CD8-positive, alpha-beta T cell (primary cell): ENCODE measurements at regions of chr7 and their contacts with region 1.

Region 1: DNA sequence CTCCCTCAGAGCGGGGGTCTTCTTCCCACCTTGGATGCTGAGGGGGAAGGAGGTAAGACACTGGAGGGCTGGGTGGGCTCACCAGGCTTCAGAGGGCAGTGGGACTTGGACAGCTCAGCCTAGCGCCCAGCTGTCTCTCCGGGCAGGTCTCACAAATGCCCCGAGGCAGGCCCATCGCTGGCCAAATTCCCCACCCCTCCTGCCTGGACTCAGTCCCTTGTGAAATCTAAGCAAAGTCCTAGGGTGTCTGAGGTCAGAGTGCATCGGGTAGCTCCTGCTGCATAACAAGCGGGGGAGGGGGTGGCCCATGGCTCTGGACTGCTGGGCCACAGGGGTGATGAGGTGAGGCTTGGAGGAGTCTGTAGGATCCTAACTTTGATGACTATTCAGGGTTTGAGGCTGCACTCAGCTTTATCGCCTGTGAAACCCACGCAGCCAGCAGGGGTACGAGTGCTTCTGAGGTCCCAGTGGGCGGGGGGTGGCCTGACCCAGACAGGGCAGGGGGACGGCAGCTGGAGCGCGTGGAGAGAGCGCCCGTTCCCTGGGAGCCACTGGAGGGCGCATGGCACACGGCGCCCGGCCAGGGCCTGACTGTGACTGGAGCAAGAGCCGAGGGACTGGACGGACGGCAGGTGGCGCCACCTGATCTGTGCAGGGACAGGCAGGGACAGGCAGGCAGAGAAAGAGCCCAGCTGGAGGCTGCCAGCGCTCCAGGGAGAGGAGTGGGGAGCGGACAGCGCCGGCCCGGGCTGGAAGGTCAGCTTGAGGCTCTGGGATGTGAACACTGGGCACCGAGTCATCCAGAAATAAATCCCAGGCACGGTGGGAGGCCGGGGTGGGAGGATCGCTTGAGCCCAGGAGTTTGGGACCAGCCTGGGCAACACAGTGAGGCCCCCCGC is 10.0 kb downstream of the CYP2W1 start:
- DNase-seq: peak; percentile 88 to 96 (median 95)
- ATAC-seq: peak; percentile 99
- H3K4me3 ChIP-seq: no peak overlapping the region
- H3K4me3 Mint-ChIP-seq: no peak overlapping the region
- H3K27ac ChIP-seq: no peak overlapping the region
- H3K27ac Mint-ChIP-seq: no peak overlapping the region
- H3K4me1 ChIP-seq: peaks cover 4% of the 10 kb centered on the region
- H3K4me1 Mint-ChIP-seq: peaks cover 4% of the 10 kb centered on the region
- H3K27me3 ChIP-seq: no peaks in the 10 kb centered on the region
- H3K27me3 Mint-ChIP-seq: no peaks in the 10 kb centered on the region
- CTCF ChIP-seq: peak; percentile 97

Region 2: GRCh38 chr7:131781-132482 is 861.0 kb before region 1 on chr7:
- CTCF ChIA-PET with region 1: no interaction called
- POLR2A ChIA-PET with region 1: no interaction called
- intact Hi-C with region 1: no loop called
- DNase-seq: no peak
- ATAC-seq: no peak
- H3K4me3 ChIP-seq: no peak overlapping the region
- H3K4me3 Mint-ChIP-seq: no peak overlapping the region
- H3K27ac ChIP-seq: no peak overlapping the region
- H3K27ac Mint-ChIP-seq: no peak overlapping the region
- H3K4me1 ChIP-seq: no peaks in the 10 kb centered on the region
- H3K4me1 Mint-ChIP-seq: no peaks in the 10 kb centered on the region
- H3K27me3 ChIP-seq: no peaks in the 10 kb centered on the region
- H3K27me3 Mint-ChIP-seq: peaks cover 7% of the 10 kb centered on the region
- CTCF ChIP-seq: no peak

Region 3: DNA sequence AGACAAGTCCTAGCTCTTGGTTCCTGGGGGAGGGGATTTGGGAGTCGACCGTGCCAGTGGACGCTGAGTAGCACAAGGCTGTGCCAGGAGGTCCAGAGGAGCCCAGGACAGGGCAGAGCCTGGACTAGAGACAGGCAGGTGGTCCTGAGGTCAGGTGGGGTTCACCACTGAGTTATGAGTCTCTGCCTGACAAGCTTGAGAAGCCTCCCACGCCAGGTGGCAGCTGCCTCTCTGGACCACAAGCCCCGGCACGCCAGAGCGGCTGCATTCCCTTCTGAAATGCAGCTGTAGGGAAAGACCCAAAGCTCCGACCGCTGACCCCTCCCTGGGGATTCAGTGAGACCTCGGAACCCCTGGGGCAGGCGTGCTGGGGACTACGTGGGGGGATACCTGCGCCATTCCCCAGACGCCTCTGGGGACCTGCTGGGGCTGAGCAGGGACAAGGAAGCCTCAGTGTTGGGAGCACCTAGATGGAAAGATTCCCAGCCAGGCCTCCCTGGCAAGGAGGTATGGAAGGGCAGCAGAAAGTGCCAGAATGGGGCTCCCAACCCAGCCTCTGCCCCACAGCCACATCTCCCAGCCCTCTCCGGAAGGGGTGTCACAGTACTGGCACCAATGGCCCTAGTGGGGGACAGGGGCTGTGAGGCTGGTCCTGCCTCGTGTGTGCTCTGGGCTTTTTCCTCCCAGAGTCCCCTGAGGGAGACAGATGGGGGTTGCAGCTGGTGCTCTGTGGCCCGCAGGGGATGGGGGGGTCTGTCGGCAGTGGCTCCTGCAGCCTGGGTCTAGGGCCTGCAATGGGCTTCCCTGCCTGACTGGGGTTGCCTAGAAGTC is 502.3 kb before region 1 on chr7:
- CTCF ChIA-PET with region 1: no interaction called
- POLR2A ChIA-PET with region 1: no interaction called
- intact Hi-C with region 1: no loop called
- DNase-seq: peak in 1 of 9 experiments; percentile 18
- ATAC-seq: no peak
- H3K4me3 ChIP-seq: no peak overlapping the region
- H3K4me3 Mint-ChIP-seq: no peak overlapping the region
- H3K27ac ChIP-seq: no peak overlapping the region
- H3K27ac Mint-ChIP-seq: no peak overlapping the region
- H3K4me1 ChIP-seq: no peaks in the 10 kb centered on the region
- H3K4me1 Mint-ChIP-seq: no peaks in the 10 kb centered on the region
- H3K27me3 ChIP-seq: no peaks in the 10 kb centered on the region
- H3K27me3 Mint-ChIP-seq: no peaks in the 10 kb centered on the region
- CTCF ChIP-seq: no peak

Region 4: DNA sequence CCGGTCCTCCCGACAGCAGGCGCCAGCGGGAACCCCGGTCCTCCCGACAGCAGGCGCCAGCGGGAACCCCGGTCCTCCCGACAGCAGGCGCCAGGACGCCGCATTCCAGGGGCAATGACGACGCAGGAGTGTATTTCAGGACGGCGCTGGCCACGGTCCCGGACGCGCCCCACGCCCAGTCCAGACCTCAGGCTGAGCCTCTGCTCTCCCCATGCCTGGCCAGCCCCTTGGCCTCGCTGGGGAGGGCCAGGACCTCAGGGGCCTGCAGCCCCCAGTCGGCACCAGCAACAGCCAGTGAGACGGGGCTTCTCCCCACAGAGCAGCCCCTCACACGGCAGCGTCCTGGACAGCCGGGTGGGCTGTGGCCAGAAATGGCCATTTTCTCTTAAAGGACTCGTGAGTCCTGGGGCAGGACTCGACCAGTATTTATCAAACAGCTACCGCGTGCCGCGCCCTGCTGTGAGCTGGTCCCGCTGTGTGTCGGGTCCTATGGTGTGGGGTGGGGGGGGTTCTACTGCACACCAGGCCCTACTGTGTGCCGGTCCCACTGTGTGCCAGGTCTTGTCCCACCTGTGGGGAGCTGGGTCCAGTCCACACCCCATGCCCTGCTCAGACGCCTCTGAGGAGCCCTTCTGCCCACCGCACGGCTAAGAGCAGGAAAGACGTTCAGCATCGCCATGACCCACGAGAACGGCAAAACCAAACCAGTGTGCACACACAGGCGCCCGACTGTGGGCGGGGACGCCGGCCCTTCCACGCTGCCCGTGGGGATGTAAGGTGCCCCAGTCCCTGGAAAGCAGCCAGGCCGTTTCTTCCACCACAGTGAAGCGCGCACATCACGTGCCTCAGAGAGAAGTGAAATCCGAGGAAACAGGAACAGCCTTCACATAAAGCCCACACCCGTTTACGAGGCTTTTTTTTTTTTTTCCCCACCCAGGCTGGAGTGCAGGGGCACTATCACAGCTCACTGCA is 83.3 kb before region 1 on chr7:
- CTCF ChIA-PET with region 1: interaction called, 21 read pairs
- POLR2A ChIA-PET with region 1: no interaction called
- intact Hi-C with region 1: no loop called
- DNase-seq: peak in 6 of 9 experiments; percentile 30 to 64 (median 47)
- ATAC-seq: peak; percentile 19
- H3K4me3 ChIP-seq: peak overlapping the region in 1 of 2 experiments; percentile 48
- H3K4me3 Mint-ChIP-seq: peak overlapping the region; percentile 55
- H3K27ac ChIP-seq: no peak overlapping the region
- H3K27ac Mint-ChIP-seq: peak overlapping the region; percentile 75
- H3K4me1 ChIP-seq: peaks cover 15% of the 10 kb centered on the region
- H3K4me1 Mint-ChIP-seq: peaks cover 9% of the 10 kb centered on the region
- H3K27me3 ChIP-seq: no peaks in the 10 kb centered on the region
- H3K27me3 Mint-ChIP-seq: no peaks in the 10 kb centered on the region
- CTCF ChIP-seq: no peak

Region 5: DNA sequence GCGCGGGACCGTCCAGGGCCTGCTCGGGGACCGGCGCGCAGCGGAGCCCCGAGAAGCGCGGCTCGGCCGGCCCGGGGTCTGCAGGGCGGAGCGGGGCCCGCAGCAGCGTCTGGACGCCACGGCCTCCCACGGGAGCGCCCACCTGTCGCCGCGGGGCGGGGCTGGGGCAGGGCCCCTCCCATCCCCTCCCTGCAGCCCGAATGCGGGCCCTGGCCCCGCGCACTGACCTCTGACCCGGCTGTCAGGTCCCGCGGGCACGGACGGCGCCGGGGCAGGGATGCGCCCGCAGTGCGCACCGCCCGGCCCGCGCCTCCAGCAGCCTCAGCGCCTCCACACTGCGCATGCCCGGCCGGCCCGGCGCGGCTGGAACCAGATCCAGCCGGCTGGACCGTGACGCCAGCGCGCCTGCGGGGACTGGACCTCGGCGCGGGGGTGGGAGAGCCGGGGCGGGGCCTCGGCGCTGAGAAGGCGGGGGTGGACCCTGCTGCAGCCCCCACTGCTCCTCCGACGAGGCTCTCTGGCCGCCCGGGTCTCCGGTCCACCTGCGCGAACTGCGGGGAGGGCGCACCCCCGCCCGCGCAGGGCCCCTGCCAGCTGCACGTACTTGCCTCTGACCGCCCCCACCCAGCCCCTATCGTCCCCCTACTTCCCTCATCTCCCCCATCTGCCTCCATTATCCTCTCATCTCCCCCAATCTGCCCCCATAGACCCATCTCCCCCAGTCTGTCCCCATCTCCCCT is 35.2 kb after region 1 on chr7:
- CTCF ChIA-PET with region 1: interaction called, 36 read pairs
- POLR2A ChIA-PET with region 1: no interaction called
- intact Hi-C with region 1: loop called in 1 of 2 experiments (anchors 1 kb)
- DNase-seq: peak; percentile 67 to 90 (median 76)
- ATAC-seq: peak; percentile 72
- H3K4me3 ChIP-seq: peak overlapping the region; percentile 36 to 57
- H3K4me3 Mint-ChIP-seq: peak overlapping the region; percentile 82
- H3K27ac ChIP-seq: peak overlapping the region; percentile 48 to 81
- H3K27ac Mint-ChIP-seq: no peak overlapping the region
- H3K4me1 ChIP-seq: peaks cover 33% of the 10 kb centered on the region
- H3K4me1 Mint-ChIP-seq: peaks cover 34% of the 10 kb centered on the region
- H3K27me3 ChIP-seq: no peaks in the 10 kb centered on the region
- H3K27me3 Mint-ChIP-seq: no peaks in the 10 kb centered on the region
- CTCF ChIP-seq: no peak

Region 6: GRCh38 chr7:1059200-1060091 is 66.5 kb after region 1 on chr7:
- CTCF ChIA-PET with region 1: interaction called, 366 read pairs
- POLR2A ChIA-PET with region 1: interaction called, 4 read pairs
- intact Hi-C with region 1: loop called in 1 of 2 experiments (anchors 1 kb)
- DNase-seq: peak in 2 of 9 experiments; percentile 32 to 33
- ATAC-seq: peak; percentile 45
- H3K4me3 ChIP-seq: no peak overlapping the region
- H3K4me3 Mint-ChIP-seq: no peak overlapping the region
- H3K27ac ChIP-seq: no peak overlapping the region
- H3K27ac Mint-ChIP-seq: no peak overlapping the region
- H3K4me1 ChIP-seq: peaks cover 19% of the 10 kb centered on the region
- H3K4me1 Mint-ChIP-seq: peaks cover 15% of the 10 kb centered on the region
- H3K27me3 ChIP-seq: no peaks in the 10 kb centered on the region
- H3K27me3 Mint-ChIP-seq: no peaks in the 10 kb centered on the region
- CTCF ChIP-seq: no peak

Region 7: GRCh38 chr7:1103009-1103788 is 110.2 kb after region 1 on chr7:
- CTCF ChIA-PET with region 1: interaction called, 14 read pairs
- POLR2A ChIA-PET with region 1: no interaction called
- intact Hi-C with region 1: no loop called
- DNase-seq: peak in 1 of 9 experiments; percentile 25
- ATAC-seq: no peak
- H3K4me3 ChIP-seq: peak overlapping the region in 1 of 2 experiments; percentile 46
- H3K4me3 Mint-ChIP-seq: peak overlapping the region; percentile 73
- H3K27ac ChIP-seq: peak overlapping the region in 1 of 2 experiments; percentile 13
- H3K27ac Mint-ChIP-seq: no peak overlapping the region
- H3K4me1 ChIP-seq: peaks cover 5% of the 10 kb centered on the region
- H3K4me1 Mint-ChIP-seq: peaks cover 16% of the 10 kb centered on the region
- H3K27me3 ChIP-seq: no peaks in the 10 kb centered on the region
- H3K27me3 Mint-ChIP-seq: no peaks in the 10 kb centered on the region
- CTCF ChIP-seq: no peak

Region 8: DNA sequence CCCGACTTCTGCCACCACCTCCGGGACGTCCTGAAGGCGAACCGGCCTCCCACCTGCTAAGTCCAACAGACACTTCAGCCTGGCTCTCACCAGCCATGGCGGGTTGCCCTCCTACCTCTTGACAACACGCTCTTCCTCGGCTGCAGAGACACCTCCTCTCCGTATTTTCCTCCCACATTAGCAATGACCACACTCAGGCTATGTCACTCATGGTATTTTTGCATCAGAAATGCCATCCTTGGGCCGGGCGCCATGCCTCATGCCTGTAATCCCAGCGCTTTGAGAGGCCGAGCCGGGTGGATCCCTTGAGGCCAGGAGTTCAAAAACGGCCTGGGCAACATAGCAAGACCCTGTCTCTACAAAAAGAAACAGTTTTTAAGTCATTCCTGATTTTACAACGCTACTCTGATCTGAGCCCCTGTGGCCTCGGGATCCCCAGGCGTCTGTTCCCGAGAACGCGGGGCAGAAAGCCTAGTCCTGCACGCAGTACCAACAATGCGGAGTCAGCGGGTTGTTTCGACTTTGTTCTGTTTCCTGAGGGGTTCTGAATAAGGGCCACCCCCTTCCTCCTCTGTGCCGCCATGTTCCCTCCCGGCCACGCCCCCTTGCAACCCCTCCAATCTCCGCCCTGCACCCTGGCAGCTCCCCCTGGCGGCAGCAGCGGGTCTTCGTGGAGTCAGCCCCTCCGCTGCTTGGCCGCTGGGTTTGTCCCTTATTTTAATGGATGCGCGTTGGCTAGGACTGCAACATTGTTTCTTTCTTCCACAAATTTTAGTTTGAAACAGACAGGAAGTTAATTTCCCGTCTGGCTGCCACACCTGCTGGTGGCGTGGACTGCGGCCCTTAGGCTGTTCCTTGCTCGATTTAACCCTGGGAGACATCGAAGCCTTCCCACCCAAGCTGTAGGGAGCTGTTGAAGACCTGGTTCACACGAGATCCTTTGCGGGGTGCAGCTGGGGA is 176.7 kb after region 1 on chr7:
- CTCF ChIA-PET with region 1: interaction called, 14 read pairs
- POLR2A ChIA-PET with region 1: no interaction called
- intact Hi-C with region 1: loop called in 1 of 2 experiments (anchors 1 kb)
- DNase-seq: peak; percentile 44 to 97 (median 93)
- ATAC-seq: peak; percentile 100
- H3K4me3 ChIP-seq: peak overlapping the region; percentile 42 to 50
- H3K4me3 Mint-ChIP-seq: peak overlapping the region; percentile 85
- H3K27ac ChIP-seq: peak overlapping the region; percentile 40 to 41
- H3K27ac Mint-ChIP-seq: peak overlapping the region; percentile 92
- H3K4me1 ChIP-seq: peaks cover 8% of the 10 kb centered on the region
- H3K4me1 Mint-ChIP-seq: peaks cover 12% of the 10 kb centered on the region
- H3K27me3 ChIP-seq: no peaks in the 10 kb centered on the region
- H3K27me3 Mint-ChIP-seq: no peaks in the 10 kb centered on the region
- CTCF ChIP-seq: peak; percentile 77

Region 9: DNA sequence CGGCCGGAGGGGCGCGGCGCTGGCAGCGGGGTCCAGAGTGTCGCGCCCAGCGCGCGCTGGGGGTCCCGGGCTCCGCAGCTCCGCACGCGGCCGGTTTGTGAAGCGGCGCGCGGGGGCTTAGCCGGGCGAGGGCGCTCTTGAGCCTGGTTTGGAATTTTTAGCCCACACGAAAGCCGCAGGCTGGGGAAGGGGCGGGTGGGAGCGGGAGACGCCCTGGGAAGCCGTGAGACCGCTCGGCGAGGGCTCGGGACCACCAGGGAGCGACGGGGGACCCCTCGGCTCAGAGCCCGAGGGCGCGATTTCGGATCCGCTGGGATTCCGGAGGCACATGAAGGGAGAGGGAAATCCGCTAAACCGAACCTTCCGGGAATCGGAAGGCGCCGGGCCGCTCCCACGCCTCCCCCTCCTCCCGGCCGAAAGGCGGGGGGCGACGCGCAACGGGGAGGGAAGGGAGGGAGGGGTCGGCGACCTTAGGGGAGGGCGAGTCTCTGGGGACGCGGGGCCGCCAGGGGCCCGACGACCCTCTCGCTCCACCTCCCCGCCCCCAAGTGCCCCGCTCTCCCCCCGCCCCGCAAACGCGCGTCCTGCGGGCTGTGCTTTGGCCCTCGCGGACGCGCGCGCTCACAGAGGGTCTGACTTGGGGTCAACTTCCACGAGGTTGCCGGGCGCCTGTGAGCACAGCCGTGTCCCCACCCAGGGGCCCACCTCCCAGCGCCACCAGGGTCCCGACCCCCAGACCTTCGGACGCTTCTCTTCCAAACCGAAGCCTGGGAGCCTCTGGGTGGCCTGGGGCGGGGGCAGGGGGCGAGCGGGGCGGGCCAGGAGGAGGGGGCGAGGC is 672.0 kb after region 1 on chr7:
- CTCF ChIA-PET with region 1: no interaction called
- POLR2A ChIA-PET with region 1: no interaction called
- intact Hi-C with region 1: no loop called
- DNase-seq: peak in 7 of 9 experiments; percentile 26 to 67 (median 59)
- ATAC-seq: peak; percentile 42
- H3K4me3 ChIP-seq: peak overlapping the region in 1 of 2 experiments; percentile 41
- H3K4me3 Mint-ChIP-seq: peak overlapping the region; percentile 47
- H3K27ac ChIP-seq: no peak overlapping the region
- H3K27ac Mint-ChIP-seq: no peak overlapping the region
- H3K4me1 ChIP-seq: peaks cover 23% of the 10 kb centered on the region
- H3K4me1 Mint-ChIP-seq: peaks cover 13% of the 10 kb centered on the region
- H3K27me3 ChIP-seq: peaks cover 3 to 40% of the 10 kb centered on the region in 2 experiments
- H3K27me3 Mint-ChIP-seq: peaks cover 29% of the 10 kb centered on the region
- CTCF ChIP-seq: peak; percentile 58